ENCODE measurements at regions of chr17 and their contacts with region 1.

Region 1: GRCh38 chr17:48363161-48363560 is 66.9 kb downstream of the SKAP1 start:
- DNase-seq: no peak
- H3K4me3 ChIP-seq: no peak overlapping the region
- H3K4me3 Mint-ChIP-seq: no peak overlapping the region
- H3K27ac ChIP-seq: no peak overlapping the region
- H3K27ac Mint-ChIP-seq: peak overlapping the region in 5 of 7 donors; percentile 16 to 46 (median 18)
- H3K4me1 ChIP-seq: peaks cover 30% of the 10 kb centered on the region
- H3K4me1 Mint-ChIP-seq: peaks cover 27 to 48% (median 39%) of the 10 kb centered on the region in 4 donors
- H3K27me3 ChIP-seq: no peaks in the 10 kb centered on the region
- H3K27me3 Mint-ChIP-seq: no peaks in the 10 kb centered on the region

Region 2: DNA sequence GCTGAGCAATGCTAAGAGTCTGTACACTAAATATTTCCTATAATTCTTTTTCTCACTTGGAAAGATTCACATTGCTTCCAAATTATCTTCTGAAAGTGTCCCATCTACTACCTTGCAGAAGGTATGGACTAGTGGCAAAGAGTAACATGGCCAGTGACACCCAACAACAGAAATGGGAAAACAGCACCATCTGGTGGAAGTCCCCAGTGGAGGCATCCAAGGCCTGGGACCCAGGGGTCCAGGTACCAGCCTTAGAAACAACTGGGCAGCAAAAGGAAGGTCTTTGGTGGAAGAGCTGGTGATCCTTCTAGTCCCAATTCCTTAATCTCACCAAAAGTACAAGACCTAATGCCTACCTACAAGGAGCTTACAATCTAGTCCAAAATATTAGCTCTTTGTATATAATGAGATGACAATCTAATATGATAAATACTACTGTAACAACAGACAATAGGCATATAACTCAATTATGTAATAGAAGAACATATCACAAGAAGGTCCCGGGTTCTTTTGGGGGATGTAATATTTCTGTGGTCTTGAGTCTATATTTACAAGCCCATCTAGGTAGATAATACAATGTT is 11.6 kb after region 1 on chr17:
- CTCF ChIA-PET with region 1: interaction called, 11 read pairs
- POLR2A ChIA-PET with region 1: interaction called, 4 read pairs
- intact Hi-C with region 1: no loop called
- DNase-seq: peak; percentile 3 to 38 (median 21)
- H3K4me3 ChIP-seq: no peak overlapping the region
- H3K4me3 Mint-ChIP-seq: no peak overlapping the region
- H3K27ac ChIP-seq: no peak overlapping the region
- H3K27ac Mint-ChIP-seq: peak overlapping the region in 2 of 7 donors; percentile 9 to 20
- H3K4me1 ChIP-seq: peaks cover 23% of the 10 kb centered on the region
- H3K4me1 Mint-ChIP-seq: peaks cover 24 to 41% (median 33%) of the 10 kb centered on the region in 4 donors
- H3K27me3 ChIP-seq: no peaks in the 10 kb centered on the region
- H3K27me3 Mint-ChIP-seq: no peaks in the 10 kb centered on the region

Measured in CD4-positive, alpha-beta memory T cell (primary cell).